ENCODE measurements at regions of chr9 and their contacts with region 1.

Region 1: GRCh38 chr9:106286249-106286648 is 576.7 kb upstream of the ZNF462 start:
- DNase-seq: peak; percentile 27
- H3K4me3 ChIP-seq: no peak overlapping the region
- H3K27ac ChIP-seq: no peak overlapping the region
- H3K4me1 ChIP-seq: peaks cover 11% of the 10 kb centered on the region
- H3K27me3 ChIP-seq: no peaks in the 10 kb centered on the region
- CTCF ChIP-seq: peak; percentile 26 to 38

Region 2: GRCh38 chr9:106228861-106229260 is 57.4 kb before region 1 on chr9:
- CTCF ChIA-PET with region 1: no interaction called
- dilution Hi-C with region 1: no loop called
- in situ Hi-C with region 1: no loop called
- intact Hi-C with region 1: no loop called
- DNase-seq: no peak
- H3K4me3 ChIP-seq: no peak overlapping the region
- H3K27ac ChIP-seq: no peak overlapping the region
- H3K4me1 ChIP-seq: no peaks in the 10 kb centered on the region
- H3K27me3 ChIP-seq: no peaks in the 10 kb centered on the region
- CTCF ChIP-seq: no peak

Region 3: GRCh38 chr9:106632621-106633020 is 346.4 kb after region 1 on chr9:
- CTCF ChIA-PET with region 1: no interaction called
- dilution Hi-C with region 1: no loop called
- in situ Hi-C with region 1: no loop called
- intact Hi-C with region 1: loop called (anchors 10 kb)
- DNase-seq: peak; percentile 65
- H3K4me3 ChIP-seq: no peak overlapping the region
- H3K27ac ChIP-seq: peak overlapping the region; percentile 51
- H3K4me1 ChIP-seq: peaks cover 15% of the 10 kb centered on the region
- H3K27me3 ChIP-seq: no peaks in the 10 kb centered on the region
- CTCF ChIP-seq: no peak